GM12878 (cell line): ENCODE measurements at regions of chr1 and their contacts with region 1.

Region 1: DNA sequence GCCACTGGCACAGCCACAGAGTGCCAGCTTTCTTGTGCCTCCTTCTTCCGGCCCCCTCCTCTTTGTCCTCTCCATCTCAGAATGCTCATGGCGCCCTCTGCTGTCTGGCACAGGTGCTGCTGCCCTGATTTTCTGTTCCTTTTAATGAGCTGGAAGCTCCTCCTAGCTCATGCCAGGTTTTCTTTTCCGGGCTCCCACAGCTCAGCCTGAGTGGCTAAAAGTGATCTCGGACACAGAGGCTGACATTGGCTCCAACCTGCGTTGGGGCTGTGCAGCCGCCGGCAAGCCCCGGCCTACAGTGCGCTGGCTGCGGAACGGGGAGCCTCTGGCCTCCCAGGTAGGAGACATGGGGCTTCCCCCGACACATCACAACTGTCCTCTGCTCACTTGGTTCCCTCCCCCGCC is 18.7 kb downstream of the CNTN2 start:
- DNase-seq: peak; percentile 20
- ATAC-seq: peak; percentile 92
- H3K4me3 ChIP-seq: no peak overlapping the region
- H3K27ac ChIP-seq: no peak overlapping the region
- H3K4me1 ChIP-seq: no peaks in the 10 kb centered on the region
- H3K27me3 ChIP-seq: no peaks in the 10 kb centered on the region
- CTCF ChIP-seq: peak; percentile 84 to 93 (median 92); a peak in 5 of 6 replicates
- EP300 ChIP-seq: no peak
- POLR2A ChIP-seq: no peak
- RAD21 ChIP-seq: peak; percentile 75

Region 2: DNA sequence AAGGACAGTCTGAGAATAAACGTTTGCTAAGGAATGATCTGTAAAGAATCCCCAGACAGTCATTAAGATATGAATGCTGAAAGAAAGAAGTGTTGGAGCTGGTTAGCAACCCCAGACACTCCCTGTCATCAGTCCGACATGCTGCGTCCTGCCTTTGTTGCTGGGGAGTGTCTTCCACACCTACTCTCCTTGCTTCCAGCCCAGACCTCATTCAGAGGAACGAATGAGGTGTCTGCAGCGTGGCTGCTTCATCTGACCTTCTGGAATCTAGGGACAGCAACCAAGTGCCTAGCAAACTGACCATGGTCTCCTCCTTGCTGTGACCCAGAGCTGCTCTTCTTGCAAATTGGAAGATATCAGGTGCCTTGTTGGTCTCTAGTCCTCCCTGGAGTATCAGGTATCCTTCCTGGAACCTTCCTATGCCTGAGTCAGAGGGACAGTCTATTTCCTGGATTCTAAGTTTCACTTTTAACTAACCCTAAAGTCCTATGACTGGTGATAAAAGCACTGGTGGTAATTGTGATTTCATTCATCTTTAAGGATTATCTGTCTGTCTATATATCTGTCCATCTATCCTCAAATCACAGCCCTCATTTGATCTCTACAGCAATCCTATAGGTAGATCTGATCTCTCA is 145.7 kb before region 1 on chr1:
- CTCF ChIA-PET with region 1: no interaction called
- POLR2A ChIA-PET with region 1: no interaction called
- RAD21 ChIA-PET with region 1: no interaction called
- SMC1A ChIA-PET with region 1: no interaction called
- in situ Hi-C with region 1: no loop called
- intact Hi-C with region 1: no loop called
- DNase-seq: no peak
- ATAC-seq: no peak
- H3K4me3 ChIP-seq: no peak overlapping the region
- H3K27ac ChIP-seq: no peak overlapping the region
- H3K4me1 ChIP-seq: no peaks in the 10 kb centered on the region
- H3K27me3 ChIP-seq: no peaks in the 10 kb centered on the region
- CTCF ChIP-seq: no peak
- EP300 ChIP-seq: no peak
- POLR2A ChIP-seq: no peak
- RAD21 ChIP-seq: no peak

Region 3: DNA sequence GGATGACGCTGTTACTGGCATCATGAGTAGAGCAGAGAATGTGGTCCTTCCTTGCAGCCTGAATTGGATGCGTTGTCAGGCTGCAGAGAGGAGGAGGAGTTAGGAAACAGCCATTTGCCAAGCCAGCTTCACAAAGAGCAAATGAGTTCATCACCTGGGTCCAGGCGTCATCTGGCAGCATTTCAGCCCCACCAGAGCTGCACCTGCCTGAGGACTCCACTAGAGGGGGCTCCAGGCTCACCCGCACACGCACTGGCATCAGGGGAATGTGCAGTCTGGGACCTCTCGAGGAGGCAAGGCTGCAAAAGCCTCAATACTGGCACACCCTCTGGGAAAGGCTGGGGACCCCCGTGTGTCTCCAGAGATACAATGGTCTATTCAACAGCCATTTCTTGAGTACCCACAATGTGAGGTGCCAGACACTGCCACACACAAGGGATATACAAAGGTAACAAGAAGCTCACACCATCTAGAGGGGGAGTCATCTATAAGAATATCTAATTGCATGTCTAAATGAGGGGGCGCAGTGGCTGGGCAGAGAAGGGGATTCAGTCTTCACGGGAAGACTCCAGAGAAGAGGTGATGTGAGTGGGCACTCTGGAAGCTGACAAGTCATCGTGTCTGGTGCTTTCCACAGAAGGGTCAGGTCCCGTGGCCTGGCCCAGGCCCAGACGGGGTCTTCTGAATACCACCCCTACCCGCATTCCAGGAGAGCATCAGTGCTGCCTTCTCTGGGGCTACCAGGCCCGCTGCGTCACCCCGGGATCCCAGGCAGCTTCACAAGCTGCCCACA is 72.2 kb before region 1 on chr1:
- CTCF ChIA-PET with region 1: interaction called, 151 read pairs
- POLR2A ChIA-PET with region 1: interaction called, 5 read pairs
- RAD21 ChIA-PET with region 1: interaction called, 81 read pairs
- SMC1A ChIA-PET with region 1: interaction called, 45 read pairs
- in situ Hi-C with region 1: no loop called
- intact Hi-C with region 1: loop called (anchors 1 kb)
- DNase-seq: no peak
- ATAC-seq: peak; percentile 90
- H3K4me3 ChIP-seq: no peak overlapping the region
- H3K27ac ChIP-seq: no peak overlapping the region
- H3K4me1 ChIP-seq: no peaks in the 10 kb centered on the region; the same call in 1 of the 2 replicates
- H3K27me3 ChIP-seq: peaks cover 2 to 4% of the 10 kb centered on the region in 2 experiments; a peak in 1 of 4 replicates
- CTCF ChIP-seq: peak; percentile 94 to 97 (median 95); a peak in 5 of 6 replicates
- EP300 ChIP-seq: no peak
- POLR2A ChIP-seq: no peak
- RAD21 ChIP-seq: peak; percentile 95

Region 4: DNA sequence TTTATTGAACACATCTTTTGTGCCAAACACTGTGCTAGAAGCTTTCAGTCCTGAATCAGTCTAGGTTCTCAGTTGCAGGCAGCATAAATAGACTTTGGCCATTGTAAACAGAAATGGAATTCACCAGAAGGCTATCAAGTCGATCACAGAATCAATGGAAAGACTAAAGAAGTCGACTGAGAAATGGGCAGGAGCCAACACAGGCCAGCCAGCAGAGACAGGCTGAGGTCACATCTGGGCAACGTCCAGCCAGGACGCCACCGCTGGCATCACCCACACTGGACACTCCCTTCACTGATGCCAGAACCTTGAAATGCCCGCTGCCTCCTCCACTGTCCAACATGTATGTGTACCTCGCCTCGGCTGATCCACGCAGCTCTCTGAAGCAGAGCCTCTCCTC is 24.1 kb before region 1 on chr1:
- CTCF ChIA-PET with region 1: interaction called, 14 read pairs
- POLR2A ChIA-PET with region 1: no interaction called
- RAD21 ChIA-PET with region 1: interaction called, 3 read pairs
- SMC1A ChIA-PET with region 1: no interaction called
- in situ Hi-C with region 1: no loop called
- intact Hi-C with region 1: no loop called
- DNase-seq: no peak
- ATAC-seq: no peak
- H3K4me3 ChIP-seq: no peak overlapping the region
- H3K27ac ChIP-seq: no peak overlapping the region
- H3K4me1 ChIP-seq: no peaks in the 10 kb centered on the region
- H3K27me3 ChIP-seq: peaks cover 0 to 5% of the 10 kb centered on the region in 2 experiments; a peak in 3 of 4 replicates
- CTCF ChIP-seq: no peak
- EP300 ChIP-seq: no peak
- POLR2A ChIP-seq: no peak
- RAD21 ChIP-seq: no peak

Region 5: GRCh38 chr1:205077158-205077933 is 15.7 kb after region 1 on chr1:
- CTCF ChIA-PET with region 1: interaction called, 65 read pairs
- POLR2A ChIA-PET with region 1: no interaction called
- RAD21 ChIA-PET with region 1: interaction called, 3 read pairs
- SMC1A ChIA-PET with region 1: interaction called, 6 read pairs
- in situ Hi-C with region 1: no loop called
- intact Hi-C with region 1: no loop called
- DNase-seq: no peak
- ATAC-seq: no peak
- H3K4me3 ChIP-seq: no peak overlapping the region
- H3K27ac ChIP-seq: no peak overlapping the region
- H3K4me1 ChIP-seq: no peaks in the 10 kb centered on the region
- H3K27me3 ChIP-seq: no peaks in the 10 kb centered on the region
- CTCF ChIP-seq: no peak
- EP300 ChIP-seq: no peak
- POLR2A ChIP-seq: no peak
- RAD21 ChIP-seq: no peak

Region 6: DNA sequence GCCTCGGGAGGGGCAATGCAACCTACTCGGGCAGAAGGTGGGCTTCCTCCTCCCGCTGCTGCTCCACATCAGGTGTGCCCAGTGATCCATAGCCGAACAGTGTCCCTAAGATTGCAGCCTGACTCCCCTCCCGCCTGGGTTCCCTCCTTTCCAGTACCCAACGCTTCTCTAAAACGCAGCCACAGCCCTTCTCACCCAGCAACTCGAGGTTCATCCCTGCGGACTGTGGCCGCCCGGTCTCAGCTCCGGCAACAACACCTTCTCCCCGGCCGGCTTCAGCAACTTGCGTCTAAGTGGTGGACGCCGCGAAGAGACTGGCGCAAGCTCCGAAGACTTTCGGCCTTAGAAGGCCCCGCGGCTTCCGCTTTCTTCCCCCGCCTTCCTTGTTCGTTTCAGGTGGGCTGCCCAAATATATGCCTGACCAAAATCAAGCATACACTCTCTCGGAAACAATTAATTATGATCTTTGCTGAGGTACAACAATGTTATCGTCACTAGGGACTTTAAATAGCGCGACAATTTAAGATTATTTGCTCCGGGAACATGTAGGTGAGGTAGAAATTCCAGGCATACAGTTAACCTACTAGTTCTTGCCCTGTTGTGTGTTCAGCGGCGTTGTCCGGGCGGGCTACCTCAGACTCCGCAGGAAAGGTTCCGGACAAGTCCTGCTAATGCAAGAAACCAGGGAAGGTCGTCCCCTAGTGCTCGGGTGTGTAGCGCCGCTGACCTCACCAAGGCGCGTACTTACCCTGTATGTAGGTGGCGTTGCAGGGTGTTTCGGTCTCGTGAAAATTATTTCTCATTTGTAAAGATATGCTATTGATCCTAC is 60.2 kb after region 1 on chr1 and contains the start of gene RBBP5:
- CTCF ChIA-PET with region 1: interaction called, 19 read pairs
- POLR2A ChIA-PET with region 1: no interaction called
- RAD21 ChIA-PET with region 1: interaction called, 5 read pairs
- SMC1A ChIA-PET with region 1: interaction called, 4 read pairs
- in situ Hi-C with region 1: no loop called
- intact Hi-C with region 1: no loop called
- DNase-seq: peak; percentile 94
- ATAC-seq: peak; percentile 97
- H3K4me3 ChIP-seq: peak within 1 kb of the TSS; percentile 96
- H3K27ac ChIP-seq: peak within 1 kb of the TSS; percentile 99
- H3K4me1 ChIP-seq: no peaks in the 10 kb centered on the region; the same call in 1 of the 2 replicates
- H3K27me3 ChIP-seq: no peaks in the 10 kb centered on the region
- CTCF ChIP-seq: peak; percentile 76 to 84 (median 82)
- EP300 ChIP-seq: peak in 1 of 2 experiments; percentile 22; a peak in 2 of 4 replicates
- POLR2A ChIP-seq: peak; percentile 99
- RAD21 ChIP-seq: peak; percentile 55
- polyA plus RNA-seq, gene RBBP5: 10.0 to 11.5 TPM

Region 7: DNA sequence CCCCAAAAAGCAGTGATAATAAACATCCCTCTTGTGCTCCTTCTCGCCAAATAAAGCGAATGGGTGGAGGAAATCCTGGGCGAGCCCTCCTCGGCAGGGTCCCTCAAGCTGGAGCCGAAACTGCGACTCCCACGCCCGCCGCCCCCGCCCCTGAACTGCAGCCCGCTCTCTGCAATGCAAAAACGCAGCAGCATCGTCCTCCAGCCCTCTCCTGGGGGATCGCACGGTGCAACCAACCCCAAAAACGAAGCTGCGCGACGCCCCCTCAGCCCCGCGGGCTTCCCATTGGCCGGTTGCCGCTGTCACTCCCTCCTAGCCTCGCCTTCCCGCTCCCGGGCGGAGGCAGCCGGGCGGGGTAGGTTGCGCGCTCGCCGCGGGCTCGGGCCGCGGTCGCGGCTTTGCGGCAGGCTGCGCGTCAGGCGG is 165.9 kb after region 1 on chr1 and contains the start of gene TMCC2:
- CTCF ChIA-PET with region 1: interaction called, 13 read pairs
- POLR2A ChIA-PET with region 1: no interaction called
- RAD21 ChIA-PET with region 1: interaction called, 17 read pairs
- SMC1A ChIA-PET with region 1: interaction called, 7 read pairs
- in situ Hi-C with region 1: no loop called
- intact Hi-C with region 1: no loop called
- DNase-seq: no peak
- ATAC-seq: peak; percentile 85
- H3K4me3 ChIP-seq: peak within 1 kb of the TSS; percentile 56
- H3K27ac ChIP-seq: no peak within 1 kb of the TSS
- H3K4me1 ChIP-seq: peaks cover 30% of the 10 kb centered on the region
- H3K27me3 ChIP-seq: peaks cover 2 to 15% of the 10 kb centered on the region in 2 experiments; a peak in 3 of 4 replicates
- CTCF ChIP-seq: no peak
- EP300 ChIP-seq: no peak
- POLR2A ChIP-seq: no peak
- RAD21 ChIP-seq: no peak
- polyA plus RNA-seq, gene TMCC2: 0.06 to 0.18 TPM

Region 8: DNA sequence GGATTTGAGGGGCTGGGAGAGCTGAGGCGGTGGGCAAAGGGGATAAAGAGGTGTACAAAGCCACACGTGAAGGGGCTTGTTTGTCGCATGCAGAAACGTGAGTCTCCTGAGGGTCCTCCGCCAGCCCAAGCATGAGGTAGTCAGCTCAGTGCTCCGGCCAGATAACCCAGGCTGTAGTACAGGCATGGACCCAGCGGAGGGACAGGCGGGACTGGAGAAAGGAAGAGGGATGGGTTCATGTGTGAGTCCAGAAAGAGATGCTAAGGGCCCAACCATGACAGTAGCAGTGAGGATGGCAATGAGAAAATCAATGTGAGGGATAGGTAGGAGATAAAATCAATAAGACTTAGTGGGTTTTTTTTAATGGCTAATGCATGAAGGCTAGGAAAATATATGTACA is 583.9 kb after region 1 on chr1:
- CTCF ChIA-PET with region 1: no interaction called
- POLR2A ChIA-PET with region 1: no interaction called
- RAD21 ChIA-PET with region 1: no interaction called
- SMC1A ChIA-PET with region 1: no interaction called
- in situ Hi-C with region 1: no loop called
- intact Hi-C with region 1: no loop called
- DNase-seq: no peak
- ATAC-seq: no peak
- H3K4me3 ChIP-seq: no peak overlapping the region
- H3K27ac ChIP-seq: no peak overlapping the region
- H3K4me1 ChIP-seq: no peaks in the 10 kb centered on the region
- H3K27me3 ChIP-seq: no peaks in the 10 kb centered on the region
- CTCF ChIP-seq: no peak
- EP300 ChIP-seq: no peak
- POLR2A ChIP-seq: no peak
- RAD21 ChIP-seq: no peak